ENCODE measurements at regions of chr16 and their contacts with region 1.

Region 1: DNA sequence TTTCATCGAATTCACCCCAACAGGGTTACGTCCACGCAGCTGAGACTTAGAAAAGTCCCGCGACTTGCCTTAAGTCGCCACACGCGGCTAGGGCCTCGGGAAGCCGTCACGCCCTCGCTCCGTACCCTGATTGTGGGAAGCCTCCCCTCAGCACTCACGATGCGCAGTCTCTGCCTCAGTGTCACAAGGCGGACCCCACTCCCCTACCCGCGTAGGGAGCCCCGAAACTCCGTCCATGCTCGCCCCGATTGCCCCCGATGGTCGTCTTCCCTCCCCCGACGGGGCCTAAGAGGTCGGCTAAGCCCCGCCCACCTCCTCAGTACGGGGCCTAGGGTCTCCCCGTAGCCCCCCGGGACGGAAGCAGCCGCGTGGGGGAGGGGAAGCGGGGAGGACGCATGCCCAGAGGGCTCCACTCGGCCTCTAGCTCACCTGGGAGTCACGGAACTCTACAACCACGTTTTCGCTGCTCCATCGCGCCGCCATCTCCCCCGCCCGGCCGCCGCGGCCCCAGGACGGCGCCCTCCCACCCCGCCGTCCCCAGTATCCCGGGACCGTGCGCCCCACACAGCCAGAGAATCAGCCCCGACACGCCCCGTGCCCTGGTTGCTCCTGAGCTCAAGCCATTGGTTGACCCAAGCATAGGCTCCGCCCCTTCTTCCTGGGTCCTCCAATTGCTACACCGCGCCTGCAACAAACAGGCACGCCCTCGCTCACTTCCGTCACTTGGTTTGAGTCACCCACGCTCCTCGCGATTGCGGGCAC is at the start of gene WDR59:
- DNase-seq: peak; percentile 98
- ATAC-seq: peak; percentile 100
- H3K4me3 ChIP-seq: peak within 1 kb of the TSS; percentile 100
- H3K27ac ChIP-seq: peak within 1 kb of the TSS; percentile 37; the same call in 1 of the 2 replicates
- H3K4me1 ChIP-seq: no peaks in the 10 kb centered on the region
- H3K27me3 ChIP-seq: no peaks in the 10 kb centered on the region
- CTCF ChIP-seq: no peak
- total RNA-seq, gene WDR59: 7.1 and 11.8 TPM in 2 replicates

Region 2: DNA sequence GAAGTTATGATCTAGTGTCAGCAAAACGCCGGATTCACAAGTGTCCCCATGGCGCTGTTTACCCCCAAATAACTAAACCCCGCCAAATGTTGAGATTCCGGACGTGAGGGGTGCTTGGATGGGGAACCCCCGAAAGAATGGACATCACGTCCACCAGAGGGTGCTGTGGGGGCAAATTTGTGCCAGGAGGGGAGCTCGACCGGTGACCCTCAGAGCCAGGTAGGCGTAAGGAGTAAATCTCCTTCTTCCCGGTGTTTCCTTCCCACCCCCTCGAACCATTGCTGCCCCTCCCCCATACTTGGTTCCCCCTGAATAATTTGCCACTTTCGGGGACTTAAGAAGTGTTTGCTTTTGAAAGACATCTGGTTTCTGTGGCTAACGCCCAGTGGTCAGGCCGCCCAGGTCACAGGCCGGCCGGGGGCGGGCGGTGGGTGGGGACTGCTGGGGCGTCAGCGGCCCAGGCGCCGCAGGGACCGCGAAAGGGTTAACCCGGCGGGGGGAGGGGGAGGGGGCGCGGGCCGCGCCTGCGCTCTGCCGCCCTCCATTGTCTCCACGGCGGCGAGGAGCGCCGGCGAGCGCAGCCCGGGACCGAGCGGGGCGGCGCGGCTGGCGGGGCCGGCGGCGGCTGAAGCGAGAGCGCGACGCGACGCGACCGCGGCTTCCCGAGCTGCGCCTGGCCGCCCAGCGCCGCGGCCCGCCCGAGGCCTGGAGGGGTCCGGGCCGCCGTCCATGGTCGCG is 13.9 kb after region 1 on chr16 and contains the start of gene ZNRF1:
- CTCF ChIA-PET with region 1: interaction called, 4 read pairs
- POLR2A ChIA-PET with region 1: interaction called, 14 read pairs
- intact Hi-C with region 1: no loop called
- DNase-seq: peak; percentile 75
- ATAC-seq: peak; percentile 66
- H3K4me3 ChIP-seq: peak within 1 kb of the TSS; percentile 85
- H3K27ac ChIP-seq: peak within 1 kb of the TSS; percentile 97
- H3K4me1 ChIP-seq: peaks cover 41% of the 10 kb centered on the region
- H3K27me3 ChIP-seq: no peaks in the 10 kb centered on the region
- CTCF ChIP-seq: peak; percentile 75
- total RNA-seq, gene ZNRF1: 60.4 and 83.6 TPM in 2 replicates

Region 3: DNA sequence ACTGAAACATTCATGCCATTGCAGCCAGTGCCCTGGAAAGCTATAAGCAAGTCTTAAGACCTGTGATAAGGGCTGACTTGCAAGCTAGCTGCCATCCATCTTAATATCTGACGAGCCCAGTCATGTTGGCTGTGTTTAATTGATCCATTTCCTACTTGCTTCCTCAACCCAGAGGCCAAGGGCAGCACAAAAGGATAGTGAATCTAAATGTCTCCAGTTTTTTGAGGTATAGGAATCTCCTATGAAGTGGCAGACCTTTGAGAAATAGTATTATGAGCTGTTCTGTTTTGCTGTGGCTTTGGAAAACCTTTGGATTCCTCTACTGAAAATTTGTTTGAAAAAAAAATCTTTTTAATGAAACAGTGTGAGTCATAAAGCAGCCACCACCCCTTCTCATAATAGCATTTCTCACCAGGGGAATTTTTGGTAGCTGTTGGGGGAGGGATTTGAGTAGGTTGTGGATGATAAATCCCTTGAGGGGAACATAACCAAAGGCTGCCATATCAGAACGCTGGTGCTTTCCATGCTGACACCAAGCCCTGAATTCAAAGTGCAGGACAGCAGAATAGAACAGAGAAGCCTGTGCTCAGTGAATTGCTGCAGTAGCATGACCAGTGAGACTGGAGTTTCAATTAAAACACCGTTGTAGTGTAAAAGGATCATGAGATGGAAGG is 27.1 kb after region 1 on chr16:
- CTCF ChIA-PET with region 1: no interaction called
- POLR2A ChIA-PET with region 1: interaction called, 10 read pairs
- intact Hi-C with region 1: no loop called
- DNase-seq: peak; percentile 83
- ATAC-seq: peak; percentile 93
- H3K4me3 ChIP-seq: peak overlapping the region; percentile 29; the same call in 1 of the 2 replicates
- H3K27ac ChIP-seq: peak overlapping the region; percentile 76
- H3K4me1 ChIP-seq: peaks cover 24% of the 10 kb centered on the region
- H3K27me3 ChIP-seq: no peaks in the 10 kb centered on the region
- CTCF ChIP-seq: no peak

Region 4: DNA sequence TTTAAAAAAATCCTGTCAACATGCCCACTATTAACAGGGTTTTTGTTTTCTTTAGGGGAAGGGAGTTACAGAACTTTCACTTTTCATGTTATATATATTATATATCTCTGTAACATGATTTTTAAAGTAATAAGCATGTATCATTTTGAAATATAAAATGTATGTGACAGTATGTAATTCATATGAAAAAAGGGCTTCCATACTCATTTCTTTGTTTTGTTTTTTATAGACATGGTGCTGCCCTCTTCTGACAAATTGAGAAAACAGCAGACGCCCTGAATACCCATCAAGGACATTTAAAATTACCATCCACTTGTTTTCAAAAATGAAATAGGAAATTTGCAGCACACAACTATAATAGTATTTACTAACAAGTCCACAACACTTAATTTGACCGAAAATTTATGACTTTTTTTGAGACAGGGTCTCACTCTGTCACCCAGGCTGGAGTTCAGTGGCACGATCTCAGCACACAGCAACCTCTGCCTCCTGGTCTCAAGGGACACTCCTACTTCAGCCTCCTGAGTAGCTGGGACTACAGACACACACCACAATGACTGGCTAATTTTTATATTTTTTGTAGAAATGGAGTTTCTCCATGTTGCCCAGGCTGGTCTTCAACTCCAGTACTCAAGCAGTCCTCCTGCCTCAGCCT is 418.2 kb after region 1 on chr16:
- CTCF ChIA-PET with region 1: no interaction called
- POLR2A ChIA-PET with region 1: interaction called, 10 read pairs
- intact Hi-C with region 1: no loop called
- DNase-seq: peak; percentile 39
- ATAC-seq: peak; percentile 29; the same call in 1 of the 2 replicates
- H3K4me3 ChIP-seq: no peak overlapping the region
- H3K27ac ChIP-seq: peak overlapping the region; percentile 52; the same call in 1 of the 2 replicates
- H3K4me1 ChIP-seq: peaks cover 11% of the 10 kb centered on the region; the same call in 1 of the 2 replicates
- H3K27me3 ChIP-seq: no peaks in the 10 kb centered on the region
- CTCF ChIP-seq: peak; percentile 63; the same call in 1 of the 2 replicates

Region 5: DNA sequence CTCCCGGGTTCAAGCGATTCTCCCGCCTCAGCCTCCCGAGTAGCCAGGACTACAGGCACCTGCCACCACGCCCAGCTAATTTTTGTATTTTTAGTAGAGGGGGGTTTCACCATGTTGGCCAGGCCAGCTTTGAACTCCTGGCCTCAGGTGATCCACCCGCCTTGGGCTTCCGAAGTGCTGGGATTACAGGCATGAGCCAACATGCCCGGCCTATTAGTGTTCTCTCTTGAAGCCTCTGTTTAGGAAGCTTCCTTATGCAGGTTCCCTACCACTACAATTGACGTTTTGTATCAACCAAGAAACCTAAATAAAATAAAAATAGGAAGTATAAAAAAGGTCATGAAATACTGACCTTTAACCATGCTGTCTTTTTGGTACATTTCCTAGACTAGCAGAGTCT is 535.2 kb after region 1 on chr16:
- CTCF ChIA-PET with region 1: no interaction called
- POLR2A ChIA-PET with region 1: no interaction called
- intact Hi-C with region 1: no loop called
- DNase-seq: no peak
- ATAC-seq: no peak
- H3K4me3 ChIP-seq: no peak overlapping the region
- H3K27ac ChIP-seq: no peak overlapping the region
- H3K4me1 ChIP-seq: no peaks in the 10 kb centered on the region
- H3K27me3 ChIP-seq: no peaks in the 10 kb centered on the region
- CTCF ChIP-seq: no peak